Naive thymus-derived CD4-positive, alpha-beta T cell (primary cell): ENCODE measurements at regions of chr19 and their contacts with region 1.

Region 1: GRCh38 chr19:43555185-43555770 is 20.0 kb downstream of the XRCC1 start:
- DNase-seq: peak; percentile 59 to 90 (median 84)
- ATAC-seq: peak; percentile 98
- H3K4me3 ChIP-seq: no peak overlapping the region
- H3K4me3 Mint-ChIP-seq: no peak overlapping the region
- H3K27ac ChIP-seq: peak overlapping the region; percentile 1
- H3K27ac Mint-ChIP-seq: peak overlapping the region; percentile 44 to 89 (median 58)
- H3K4me1 ChIP-seq: peaks cover 3 to 10% of the 10 kb centered on the region in 2 donors
- H3K4me1 Mint-ChIP-seq: peaks cover 11 to 32% (median 23%) of the 10 kb centered on the region in 7 donors
- H3K27me3 ChIP-seq: no peaks in the 10 kb centered on the region
- H3K27me3 Mint-ChIP-seq: no peaks in the 10 kb centered on the region

Region 2: DNA sequence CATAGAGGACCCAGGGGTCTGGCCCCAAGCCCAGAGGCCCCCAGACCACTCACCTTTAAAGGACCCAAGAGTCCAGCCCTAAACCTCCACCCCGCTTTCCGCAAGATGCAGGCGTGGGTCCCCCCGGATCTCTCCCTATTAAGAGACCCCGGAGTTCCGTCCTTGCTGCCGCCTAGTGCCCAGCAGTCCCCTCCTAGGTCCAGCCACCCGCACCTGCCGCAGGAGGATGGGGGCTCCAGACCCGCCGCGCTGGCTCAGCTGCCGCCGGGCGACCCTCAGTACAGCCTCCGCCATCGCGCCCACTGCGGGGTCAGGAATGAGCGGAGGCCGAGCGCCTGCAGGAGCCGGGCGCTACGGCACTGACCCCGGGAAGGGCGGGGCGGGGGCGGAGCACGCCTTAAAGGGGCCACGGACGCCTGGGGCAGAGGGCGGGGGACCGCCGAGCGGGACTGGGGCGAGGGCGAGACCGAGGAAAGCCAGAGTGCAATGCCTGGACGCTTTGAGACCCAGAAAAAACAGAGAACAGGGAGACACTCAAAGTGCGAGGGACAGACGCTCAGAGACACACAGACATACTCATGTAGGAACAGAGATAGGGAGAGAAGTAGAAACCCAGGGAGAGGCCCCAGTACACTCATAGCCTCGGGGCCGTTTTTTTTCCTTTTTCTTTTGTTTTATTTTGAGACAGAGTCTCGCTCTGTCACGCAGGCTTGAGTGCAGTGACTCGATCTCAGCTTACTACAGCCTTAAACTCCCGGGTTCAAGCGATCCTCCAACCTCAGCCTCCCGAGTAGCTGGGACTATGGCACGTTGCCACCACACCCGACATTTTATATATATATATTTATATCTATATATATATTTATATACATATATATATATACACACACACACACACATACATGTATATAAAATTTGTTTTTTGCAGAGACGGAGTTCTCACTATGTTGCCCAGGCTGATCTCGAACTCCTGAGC is 28.1 kb before region 1 on chr19 and contains the start of gene ETHE1:
- CTCF ChIA-PET with region 1: interaction called, 15 read pairs
- POLR2A ChIA-PET with region 1: interaction called, 30 read pairs
- intact Hi-C with region 1: loop called in 1 of 2 experiments (anchors 2 kb)
- DNase-seq: peak; percentile 39 to 86 (median 50)
- ATAC-seq: peak; percentile 86
- H3K4me3 ChIP-seq: peak within 1 kb of the TSS; percentile 75
- H3K4me3 Mint-ChIP-seq: peak within 1 kb of the TSS; percentile 78 to 94 (median 84)
- H3K27ac ChIP-seq: peak within 1 kb of the TSS; percentile 81
- H3K27ac Mint-ChIP-seq: peak within 1 kb of the TSS; percentile 75 to 96 (median 86)
- H3K4me1 ChIP-seq: peaks cover 15 to 24% of the 10 kb centered on the region in 2 donors
- H3K4me1 Mint-ChIP-seq: peaks cover 18 to 38% (median 25%) of the 10 kb centered on the region in 7 donors
- H3K27me3 ChIP-seq: no peaks in the 10 kb centered on the region
- H3K27me3 Mint-ChIP-seq: no peaks in the 10 kb centered on the region
- total RNA-seq, gene ETHE1: 20.3 to 58.6 (median 23.9) TPM

Region 3: GRCh38 chr19:43532962-43533545 is 22.2 kb before region 1 on chr19 and contains the start of gene ZNF575:
- CTCF ChIA-PET with region 1: interaction called, 20 read pairs
- POLR2A ChIA-PET with region 1: interaction called, 30 read pairs
- intact Hi-C with region 1: loop called in 1 of 2 experiments (anchors 2 kb)
- DNase-seq: peak; percentile 61 to 91 (median 87)
- ATAC-seq: peak; percentile 64
- H3K4me3 ChIP-seq: peak within 1 kb of the TSS; percentile 98
- H3K4me3 Mint-ChIP-seq: peak within 1 kb of the TSS; percentile 88 to 98 (median 95)
- H3K27ac ChIP-seq: peak within 1 kb of the TSS; percentile 68
- H3K27ac Mint-ChIP-seq: peak within 1 kb of the TSS; percentile 90 to 98 (median 95)
- H3K4me1 ChIP-seq: peaks cover 12 to 14% of the 10 kb centered on the region in 2 donors
- H3K4me1 Mint-ChIP-seq: peaks cover 5 to 27% (median 18%) of the 10 kb centered on the region in 7 donors
- H3K27me3 ChIP-seq: no peaks in the 10 kb centered on the region
- H3K27me3 Mint-ChIP-seq: no peaks in the 10 kb centered on the region
- total RNA-seq, gene ZNF575: 4.5 to 10.7 (median 5.6) TPM

Region 4: DNA sequence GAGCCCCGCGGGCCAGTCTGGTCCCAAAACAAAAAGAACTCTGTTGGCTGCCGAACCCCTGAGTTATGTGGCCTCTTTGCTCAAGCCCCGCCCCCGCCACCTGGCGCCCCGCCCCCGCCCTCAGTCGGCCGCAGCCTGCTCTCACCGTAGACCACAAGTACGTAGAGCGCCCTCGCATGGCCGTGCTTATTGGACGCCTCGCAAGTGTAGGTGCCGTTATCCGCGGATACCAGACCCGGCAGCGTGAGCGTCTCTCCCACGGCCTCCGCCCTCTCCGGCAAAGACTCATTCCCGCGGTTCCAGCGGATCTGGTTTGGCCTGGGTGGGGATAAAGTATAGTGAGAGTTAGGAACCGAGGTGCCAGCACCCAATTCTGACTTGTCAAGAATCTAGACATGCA is 69.7 kb after region 1 on chr19:
- CTCF ChIA-PET with region 1: interaction called, 3 read pairs
- POLR2A ChIA-PET with region 1: interaction called, 4 read pairs
- intact Hi-C with region 1: loop called in 1 of 2 experiments (anchors 1 kb)
- DNase-seq: peak; percentile 69 to 87 (median 82)
- ATAC-seq: peak; percentile 96
- H3K4me3 ChIP-seq: no peak overlapping the region
- H3K4me3 Mint-ChIP-seq: peak overlapping the region in 6 of 10 donors; percentile 32 to 54 (median 52)
- H3K27ac ChIP-seq: no peak overlapping the region
- H3K27ac Mint-ChIP-seq: peak overlapping the region in 5 of 9 donors; percentile 40 to 70 (median 56)
- H3K4me1 ChIP-seq: peaks cover 9 to 13% of the 10 kb centered on the region in 2 donors
- H3K4me1 Mint-ChIP-seq: peaks cover 13 to 38% (median 30%) of the 10 kb centered on the region in 7 donors
- H3K27me3 ChIP-seq: no peaks in the 10 kb centered on the region
- H3K27me3 Mint-ChIP-seq: peaks cover 0 to 12% (median 0%) of the 10 kb centered on the region in 5 donors

Region 5: DNA sequence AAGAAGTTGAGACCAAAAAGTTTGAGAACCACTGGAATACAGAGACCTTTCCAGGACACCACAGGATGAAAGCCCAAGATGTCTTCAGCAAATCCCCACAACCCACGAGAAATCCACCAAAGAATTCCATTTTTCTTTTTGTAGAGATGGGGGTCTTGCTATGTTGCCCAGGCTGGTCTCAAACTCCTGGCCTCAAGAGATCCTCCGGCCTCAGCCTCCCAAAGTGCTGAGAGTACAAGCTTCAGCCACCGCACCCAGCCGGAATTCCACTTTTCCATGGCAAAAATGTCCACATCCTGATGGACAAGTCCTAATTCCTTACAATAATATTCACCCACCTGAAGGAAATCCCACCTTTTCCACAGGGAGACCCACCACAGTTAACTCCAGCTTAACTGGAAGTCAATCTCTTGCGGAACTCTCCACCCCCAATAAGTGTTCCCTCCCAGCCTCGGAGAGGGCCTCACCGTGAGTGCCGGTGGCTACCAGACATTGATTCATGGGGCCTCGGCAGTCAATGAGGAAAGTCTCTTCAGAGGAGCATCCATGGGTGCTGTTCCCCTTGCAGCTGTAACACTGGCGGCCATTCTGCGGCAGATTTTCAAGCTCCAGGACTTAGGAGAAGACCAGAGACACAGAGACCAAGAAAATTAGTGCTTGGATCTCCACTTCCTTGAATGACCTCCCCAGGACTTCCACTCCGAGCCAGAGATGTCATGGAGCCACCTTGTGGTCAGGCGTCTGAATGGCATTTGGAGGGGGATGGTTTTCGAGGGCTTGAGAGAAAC is 96.7 kb after region 1 on chr19:
- CTCF ChIA-PET with region 1: interaction called, 3 read pairs
- POLR2A ChIA-PET with region 1: no interaction called
- intact Hi-C with region 1: loop called in 1 of 2 experiments (anchors 1 kb)
- DNase-seq: peak in 2 of 9 donors; percentile 28 to 37
- ATAC-seq: peak; percentile 48
- H3K4me3 ChIP-seq: no peak overlapping the region
- H3K4me3 Mint-ChIP-seq: no peak overlapping the region
- H3K27ac ChIP-seq: no peak overlapping the region
- H3K27ac Mint-ChIP-seq: peak overlapping the region in 1 of 9 donors; percentile 9
- H3K4me1 ChIP-seq: no peaks in the 10 kb centered on the region
- H3K4me1 Mint-ChIP-seq: peaks cover 0 to 5% (median 0%) of the 10 kb centered on the region in 7 donors
- H3K27me3 ChIP-seq: no peaks in the 10 kb centered on the region
- H3K27me3 Mint-ChIP-seq: no peaks in the 10 kb centered on the region

Region 6: DNA sequence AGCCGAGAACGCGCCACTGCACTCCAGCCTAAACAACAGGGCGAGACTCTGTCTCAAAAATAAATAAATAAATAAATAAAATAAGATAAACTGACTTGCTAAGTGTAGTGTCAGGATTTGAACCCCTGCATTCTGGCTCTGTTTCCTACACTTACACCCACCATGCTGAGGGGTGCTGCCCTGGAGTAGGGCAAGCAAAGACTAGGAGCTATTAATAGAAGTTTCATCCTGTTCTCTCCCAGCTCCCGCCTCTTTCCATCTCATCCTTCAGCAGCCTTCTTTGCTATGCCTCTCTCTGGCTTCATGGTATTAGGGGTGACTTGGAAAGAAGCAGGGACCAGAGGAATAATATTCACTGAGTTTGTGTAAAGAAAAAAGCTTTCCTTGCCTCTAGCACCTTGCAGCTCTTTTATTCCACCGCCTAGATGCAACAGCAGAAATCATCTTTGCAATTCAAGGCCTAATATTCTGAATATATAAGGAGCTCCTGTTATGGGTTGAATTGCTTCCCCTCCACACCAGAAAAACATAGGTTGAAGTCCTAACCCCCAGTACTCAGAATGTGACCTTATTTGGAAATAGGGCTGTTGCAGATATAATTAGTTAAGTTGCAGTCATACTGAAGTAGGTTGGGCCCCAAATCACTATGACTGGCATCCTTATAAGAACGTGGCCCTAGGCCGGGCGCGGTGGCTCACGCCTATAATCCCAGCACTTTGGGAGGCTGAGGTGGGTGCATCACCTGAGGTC is 123.4 kb after region 1 on chr19:
- CTCF ChIA-PET with region 1: no interaction called
- POLR2A ChIA-PET with region 1: no interaction called
- intact Hi-C with region 1: no loop called
- DNase-seq: no peak
- ATAC-seq: no peak
- H3K4me3 ChIP-seq: no peak overlapping the region
- H3K4me3 Mint-ChIP-seq: no peak overlapping the region
- H3K27ac ChIP-seq: no peak overlapping the region
- H3K27ac Mint-ChIP-seq: no peak overlapping the region
- H3K4me1 ChIP-seq: no peaks in the 10 kb centered on the region
- H3K4me1 Mint-ChIP-seq: peaks cover 0 to 11% (median 5%) of the 10 kb centered on the region in 7 donors
- H3K27me3 ChIP-seq: no peaks in the 10 kb centered on the region
- H3K27me3 Mint-ChIP-seq: no peaks in the 10 kb centered on the region

Region 7: GRCh38 chr19:44071824-44072542 is 516.7 kb after region 1 on chr19 and contains the start of gene ZNF284:
- CTCF ChIA-PET with region 1: no interaction called
- POLR2A ChIA-PET with region 1: no interaction called
- intact Hi-C with region 1: no loop called
- DNase-seq: peak; percentile 61 to 88 (median 84)
- ATAC-seq: peak; percentile 99
- H3K4me3 ChIP-seq: peak within 1 kb of the TSS; percentile 85
- H3K4me3 Mint-ChIP-seq: peak within 1 kb of the TSS; percentile 88 to 98 (median 92)
- H3K27ac ChIP-seq: peak within 1 kb of the TSS; percentile 63
- H3K27ac Mint-ChIP-seq: peak within 1 kb of the TSS; percentile 47 to 91 (median 75)
- H3K4me1 ChIP-seq: peaks cover 15 to 17% of the 10 kb centered on the region in 2 donors
- H3K4me1 Mint-ChIP-seq: peaks cover 20 to 40% (median 27%) of the 10 kb centered on the region in 7 donors
- H3K27me3 ChIP-seq: no peaks in the 10 kb centered on the region
- H3K27me3 Mint-ChIP-seq: no peaks in the 10 kb centered on the region
- total RNA-seq, gene ZNF284: 1.9 to 4.4 (median 2.4) TPM